ENCODE measurements at regions of chr10 and their contacts with region 1.

Region 1: GRCh38 chr10:73730153-73730906 is 13.8 kb upstream of the SEC24C start:
- DNase-seq: peak; percentile 95
- ATAC-seq: peak; percentile 93
- H3K4me3 Mint-ChIP-seq: peak overlapping the region; percentile 98
- H3K27ac Mint-ChIP-seq: peak overlapping the region; percentile 97
- H3K4me1 Mint-ChIP-seq: peaks cover 9% of the 10 kb centered on the region
- H3K27me3 Mint-ChIP-seq: no peaks in the 10 kb centered on the region

Region 2: GRCh38 chr10:73772280-73773151 is 42.2 kb after region 1 on chr10:
- CTCF ChIA-PET with region 1: interaction called, 4 read pairs
- POLR2A ChIA-PET with region 1: interaction called, 5 read pairs
- intact Hi-C with region 1: loop called in 1 of 2 experiments (anchors 1 kb)
- DNase-seq: peak; percentile 89
- ATAC-seq: peak; percentile 75
- H3K4me3 Mint-ChIP-seq: peak overlapping the region; percentile 86
- H3K27ac Mint-ChIP-seq: peak overlapping the region; percentile 91
- H3K4me1 Mint-ChIP-seq: peaks cover 53% of the 10 kb centered on the region
- H3K27me3 Mint-ChIP-seq: no peaks in the 10 kb centered on the region

Region 3: DNA sequence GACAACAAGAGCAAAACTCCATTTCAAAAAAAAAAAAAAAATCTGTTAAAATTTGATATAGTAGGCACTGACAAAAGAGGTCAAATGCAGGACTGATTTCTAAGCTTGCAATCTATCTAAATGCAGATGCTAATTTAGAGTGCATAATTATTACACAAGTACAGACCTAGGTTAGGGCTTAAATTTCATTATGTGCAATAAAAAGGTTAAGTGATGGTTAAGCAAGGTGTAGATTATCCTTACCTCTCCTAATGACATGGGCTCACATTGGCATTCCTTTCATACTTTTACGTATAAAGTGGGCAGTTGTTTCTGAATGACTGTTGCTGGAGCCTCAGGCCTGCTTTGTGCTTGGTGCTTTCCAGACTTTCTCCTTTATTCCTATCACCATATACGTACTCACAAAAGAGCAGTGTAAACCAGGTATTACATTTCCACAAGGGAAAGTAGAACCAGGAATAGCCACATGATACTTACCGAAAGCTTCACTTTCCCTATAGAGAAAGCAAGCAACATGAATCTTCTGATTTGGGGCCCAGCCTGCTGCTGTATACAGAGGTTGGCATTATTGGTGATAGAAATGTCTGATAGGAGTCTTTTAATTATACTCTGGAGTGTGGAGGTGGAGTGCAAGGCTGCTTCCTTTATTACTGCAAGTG is 49.3 kb after region 1 on chr10:
- CTCF ChIA-PET with region 1: interaction called, 6 read pairs
- POLR2A ChIA-PET with region 1: interaction called, 14 read pairs
- intact Hi-C with region 1: no loop called
- DNase-seq: no peak
- ATAC-seq: no peak
- H3K4me3 Mint-ChIP-seq: peak overlapping the region; percentile 82
- H3K27ac Mint-ChIP-seq: peak overlapping the region; percentile 33
- H3K4me1 Mint-ChIP-seq: peaks cover 54% of the 10 kb centered on the region
- H3K27me3 Mint-ChIP-seq: no peaks in the 10 kb centered on the region

Region 4: GRCh38 chr10:74213571-74214162 is 483.3 kb after region 1 on chr10:
- CTCF ChIA-PET with region 1: no interaction called
- POLR2A ChIA-PET with region 1: no interaction called
- intact Hi-C with region 1: no loop called
- DNase-seq: peak; percentile 66
- ATAC-seq: peak; percentile 58
- H3K4me3 Mint-ChIP-seq: no peak overlapping the region
- H3K27ac Mint-ChIP-seq: no peak overlapping the region
- H3K4me1 Mint-ChIP-seq: peaks cover 4% of the 10 kb centered on the region
- H3K27me3 Mint-ChIP-seq: no peaks in the 10 kb centered on the region